Endothelial cell of umbilical vein (primary cell): ENCODE measurements at regions of chr13 and their contacts with region 1.

Region 1: DNA sequence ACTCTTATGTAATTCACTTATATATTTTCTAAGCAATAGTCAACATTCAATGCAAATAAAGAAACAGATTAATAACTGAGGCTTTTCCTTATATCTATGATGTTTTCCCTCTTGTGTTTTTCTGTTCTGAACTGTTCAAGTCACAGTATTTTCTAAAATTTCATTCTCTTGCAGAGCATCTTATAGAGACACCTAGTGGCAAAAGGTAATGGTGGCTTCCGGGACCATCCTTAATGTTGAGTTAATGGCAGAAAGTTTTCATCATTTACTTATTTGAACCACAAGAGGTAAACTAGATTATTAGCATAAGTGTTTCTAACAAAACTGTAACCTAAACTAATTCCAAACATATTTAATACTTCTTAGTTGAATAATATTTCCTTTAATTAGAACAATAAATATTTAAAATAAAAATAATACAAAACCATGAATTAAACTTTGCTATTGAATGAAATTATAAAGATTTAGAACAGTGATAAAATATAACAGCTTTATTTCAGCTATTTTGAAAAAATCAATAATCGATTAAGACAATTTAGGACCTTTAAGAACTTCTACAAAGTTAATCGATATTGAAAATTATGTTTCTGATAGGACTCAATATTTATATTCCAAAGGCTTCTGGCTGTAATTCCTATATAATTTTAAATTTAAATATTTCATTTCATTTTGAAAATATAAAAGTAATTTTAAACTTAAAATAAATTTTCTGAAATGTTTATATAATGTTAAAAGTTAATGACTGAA is 1.6 kb upstream of the SLITRK5 start:
- DNase-seq: peak; percentile 6
- H3K4me3 ChIP-seq: no peak overlapping the region
- H3K27ac ChIP-seq: no peak overlapping the region
- H3K4me1 ChIP-seq: peaks cover 4% of the 10 kb centered on the region
- H3K27me3 ChIP-seq: peaks cover 17 to 22% of the 10 kb centered on the region in 2 experiments
- CTCF ChIP-seq: peak; percentile 19 to 33
- POLR2A ChIP-seq: no peak

Region 2: DNA sequence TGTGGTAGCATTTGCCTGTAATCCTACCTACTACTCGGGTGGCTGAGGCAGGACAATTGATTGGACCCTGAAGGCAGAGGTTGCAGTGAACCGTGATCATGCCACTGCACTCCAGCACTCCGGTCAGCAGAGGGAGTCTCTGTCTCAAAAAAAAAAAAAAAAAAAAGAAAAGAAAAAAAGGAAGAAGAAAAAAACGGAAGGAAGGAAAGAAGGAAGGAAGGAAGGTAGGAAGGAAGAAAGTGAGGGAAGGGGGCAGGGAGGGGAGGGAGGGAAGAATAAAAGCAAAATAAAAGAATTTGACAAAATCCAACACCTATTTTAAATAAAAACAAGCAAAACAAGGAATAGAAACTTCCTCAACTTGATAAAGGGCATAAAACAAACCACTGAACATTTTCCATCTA is 410.0 kb before region 1 on chr13:
- CTCF ChIA-PET with region 1: no interaction called
- POLR2A ChIA-PET with region 1: no interaction called
- dilution Hi-C with region 1: no loop called
- intact Hi-C with region 1: loop called (anchors 5 kb)
- DNase-seq: no peak
- H3K4me3 ChIP-seq: no peak overlapping the region
- H3K27ac ChIP-seq: no peak overlapping the region
- H3K4me1 ChIP-seq: no peaks in the 10 kb centered on the region
- H3K27me3 ChIP-seq: no peaks in the 10 kb centered on the region
- CTCF ChIP-seq: no peak
- POLR2A ChIP-seq: no peak

Region 3: DNA sequence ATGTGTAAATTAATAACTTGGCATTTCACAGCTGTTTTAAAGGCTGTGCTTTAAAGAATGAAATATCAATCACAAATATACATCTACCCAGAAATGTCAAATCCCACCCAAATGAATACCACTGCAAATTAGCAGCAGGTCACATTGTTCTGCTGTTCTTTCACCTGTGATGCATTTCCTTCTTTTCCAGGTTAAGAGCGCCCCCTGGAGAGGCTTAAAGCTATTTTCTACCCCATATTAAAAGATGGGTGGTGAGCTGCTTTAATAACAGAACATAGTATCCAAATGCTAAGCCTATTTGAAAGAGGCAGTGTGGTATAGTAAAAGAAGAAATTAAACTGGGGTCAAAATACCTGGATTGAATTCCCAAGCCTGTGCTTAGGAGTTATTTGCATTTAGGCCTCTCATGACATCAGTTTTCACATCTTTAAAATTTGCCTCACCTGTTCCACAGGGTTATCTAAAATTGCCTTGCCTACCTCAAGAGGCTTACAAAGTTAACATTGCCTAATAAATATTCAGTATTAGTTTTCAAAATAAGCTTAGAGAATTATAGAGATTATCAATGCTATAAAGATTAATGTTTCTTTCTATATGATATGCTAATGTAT is 395.2 kb before region 1 on chr13:
- CTCF ChIA-PET with region 1: no interaction called
- POLR2A ChIA-PET with region 1: no interaction called
- dilution Hi-C with region 1: no loop called
- intact Hi-C with region 1: loop called (anchors 5 kb)
- DNase-seq: no peak
- H3K4me3 ChIP-seq: no peak overlapping the region
- H3K27ac ChIP-seq: no peak overlapping the region
- H3K4me1 ChIP-seq: no peaks in the 10 kb centered on the region
- H3K27me3 ChIP-seq: no peaks in the 10 kb centered on the region
- CTCF ChIP-seq: no peak
- POLR2A ChIP-seq: no peak

Region 4: DNA sequence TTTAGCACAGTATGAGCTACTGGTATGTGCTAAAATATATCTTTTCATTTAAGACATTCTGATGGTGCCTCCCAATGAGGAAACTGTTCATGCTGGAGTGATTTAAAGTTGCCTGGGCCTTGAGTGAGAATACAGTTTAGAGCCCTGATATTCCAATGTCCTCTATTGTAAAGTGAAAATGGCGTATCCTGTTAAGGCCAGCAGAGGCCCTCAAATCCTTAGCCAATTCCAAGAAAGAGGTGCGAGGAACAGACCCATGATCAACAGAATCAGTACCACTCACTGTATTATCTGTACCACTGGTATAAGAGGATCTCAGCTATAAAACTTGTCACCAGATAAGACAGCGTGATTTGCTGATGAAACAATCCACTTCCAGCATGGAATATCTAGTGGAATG is 271.5 kb before region 1 on chr13:
- CTCF ChIA-PET with region 1: no interaction called
- POLR2A ChIA-PET with region 1: no interaction called
- dilution Hi-C with region 1: no loop called
- intact Hi-C with region 1: loop called (anchors 2 kb)
- DNase-seq: no peak
- H3K4me3 ChIP-seq: no peak overlapping the region
- H3K27ac ChIP-seq: no peak overlapping the region
- H3K4me1 ChIP-seq: no peaks in the 10 kb centered on the region
- H3K27me3 ChIP-seq: no peaks in the 10 kb centered on the region
- CTCF ChIP-seq: no peak
- POLR2A ChIP-seq: no peak

Region 5: DNA sequence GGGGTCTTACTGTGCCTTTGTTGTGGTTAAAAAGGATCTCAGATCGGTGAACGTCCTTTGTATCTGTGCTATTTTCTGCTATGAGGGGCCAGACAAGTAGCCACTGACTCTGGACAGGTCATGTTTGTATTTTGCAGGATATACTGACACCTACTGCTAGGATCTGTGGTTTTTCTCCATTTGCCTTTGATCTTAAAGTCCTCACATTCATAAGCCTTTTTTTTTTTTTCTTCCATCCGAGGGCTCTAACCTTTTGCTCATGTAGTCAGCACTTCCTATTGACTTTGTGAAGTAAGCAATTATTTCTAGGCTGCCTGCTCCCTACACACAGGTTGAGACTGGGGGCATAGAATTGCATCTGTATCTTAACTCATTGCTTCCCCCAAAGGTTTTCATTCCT is 107.8 kb after region 1 on chr13:
- CTCF ChIA-PET with region 1: no interaction called
- POLR2A ChIA-PET with region 1: no interaction called
- dilution Hi-C with region 1: no loop called
- intact Hi-C with region 1: no loop called
- DNase-seq: no peak
- H3K4me3 ChIP-seq: no peak overlapping the region
- H3K27ac ChIP-seq: no peak overlapping the region
- H3K4me1 ChIP-seq: no peaks in the 10 kb centered on the region
- H3K27me3 ChIP-seq: no peaks in the 10 kb centered on the region
- CTCF ChIP-seq: no peak
- POLR2A ChIP-seq: no peak